SK-N-SH (cell line): ENCODE measurements at regions of chr15 and their contacts with region 1.

Region 1: DNA sequence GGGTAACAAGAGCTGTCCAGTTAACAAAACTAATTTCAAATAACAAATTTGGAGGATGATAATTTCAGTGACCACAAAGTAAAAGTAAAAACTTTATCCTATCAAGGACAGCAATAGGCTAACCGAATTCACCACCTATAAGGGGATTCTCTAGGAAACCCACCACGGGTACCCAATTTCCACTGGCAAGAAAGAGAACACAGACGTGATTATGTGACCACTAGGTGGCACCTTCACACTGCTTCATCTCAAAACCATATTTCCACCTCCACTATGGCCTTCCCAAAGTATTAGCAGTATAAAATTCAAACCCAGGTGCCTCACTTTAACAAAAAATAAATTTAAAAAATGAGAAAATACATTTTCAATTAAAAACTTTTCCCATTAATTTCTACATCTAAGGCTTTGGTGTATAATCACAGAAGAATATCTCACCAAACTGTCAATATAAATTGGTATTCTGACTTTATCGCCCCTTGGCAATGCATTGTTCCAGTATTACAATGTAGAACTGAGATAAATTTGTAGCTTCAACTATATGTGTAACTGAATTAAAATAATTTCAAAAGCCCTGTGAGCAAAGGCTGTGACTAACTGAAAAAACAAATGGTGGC is 96.5 kb downstream of the FSIP1 start:
- DNase-seq: peak; percentile 53
- H3K4me3 ChIP-seq: no peak overlapping the region
- H3K27ac ChIP-seq: peak overlapping the region in 1 of 2 experiments; percentile 3; a peak in 1 of 4 replicates
- H3K4me1 ChIP-seq: peaks cover 0 to 7% of the 10 kb centered on the region in 2 experiments; a peak in 2 of 4 replicates
- H3K27me3 ChIP-seq: no peaks in the 10 kb centered on the region
- CTCF ChIP-seq: peak; percentile 88
- EP300 ChIP-seq: no peak
- RAD21 ChIP-seq: peak; percentile 92

Region 2: GRCh38 chr15:38707802-38708671 is 978.1 kb before region 1 on chr15:
- CTCF ChIA-PET with region 1: interaction called, 10 read pairs
- POLR2A ChIA-PET with region 1: no interaction called
- DNase-seq: peak; percentile 44
- H3K4me3 ChIP-seq: no peak overlapping the region
- H3K27ac ChIP-seq: peak overlapping the region; percentile 18 to 36; a peak in 1 of 4 replicates
- H3K4me1 ChIP-seq: no peaks in the 10 kb centered on the region; a peak in 2 of 4 replicates
- H3K27me3 ChIP-seq: no peaks in the 10 kb centered on the region
- CTCF ChIP-seq: peak; percentile 85
- EP300 ChIP-seq: no peak
- RAD21 ChIP-seq: peak; percentile 98

Region 3: GRCh38 chr15:39666677-39667076 is 19.4 kb before region 1 on chr15:
- CTCF ChIA-PET with region 1: interaction called, 16 read pairs
- POLR2A ChIA-PET with region 1: no interaction called
- DNase-seq: no peak
- H3K4me3 ChIP-seq: no peak overlapping the region
- H3K27ac ChIP-seq: peak overlapping the region; percentile 53 to 68; a peak in 3 of 4 replicates
- H3K4me1 ChIP-seq: peaks cover 4 to 19% of the 10 kb centered on the region in 2 experiments
- H3K27me3 ChIP-seq: no peaks in the 10 kb centered on the region
- CTCF ChIP-seq: no peak
- EP300 ChIP-seq: no peak
- RAD21 ChIP-seq: no peak

Region 4: DNA sequence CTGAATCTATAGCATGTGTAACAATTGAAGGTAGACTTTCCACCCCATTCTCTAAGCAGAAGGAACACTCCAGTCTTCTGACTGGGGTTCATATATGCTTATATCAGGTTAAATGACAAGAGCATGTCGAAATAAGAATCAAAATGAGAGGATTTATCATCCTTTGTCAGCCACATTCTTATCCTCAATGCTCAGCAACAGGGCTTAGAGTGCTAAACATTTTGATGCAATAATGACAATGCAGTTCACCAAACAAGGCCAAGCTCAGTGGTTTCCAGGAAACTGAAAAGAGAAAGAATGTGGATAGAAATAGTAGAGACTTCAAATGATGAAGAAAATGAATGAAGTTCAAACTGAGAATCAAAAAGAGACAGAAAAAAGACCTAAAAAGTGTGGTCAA is 18.6 kb after region 1 on chr15:
- CTCF ChIA-PET with region 1: interaction called, 42 read pairs
- POLR2A ChIA-PET with region 1: no interaction called
- DNase-seq: no peak
- H3K4me3 ChIP-seq: no peak overlapping the region
- H3K27ac ChIP-seq: peak overlapping the region in 1 of 2 experiments; percentile 15; a peak in 1 of 4 replicates
- H3K4me1 ChIP-seq: no peaks in the 10 kb centered on the region
- H3K27me3 ChIP-seq: no peaks in the 10 kb centered on the region
- CTCF ChIP-seq: no peak
- EP300 ChIP-seq: no peak
- RAD21 ChIP-seq: no peak

Region 5: DNA sequence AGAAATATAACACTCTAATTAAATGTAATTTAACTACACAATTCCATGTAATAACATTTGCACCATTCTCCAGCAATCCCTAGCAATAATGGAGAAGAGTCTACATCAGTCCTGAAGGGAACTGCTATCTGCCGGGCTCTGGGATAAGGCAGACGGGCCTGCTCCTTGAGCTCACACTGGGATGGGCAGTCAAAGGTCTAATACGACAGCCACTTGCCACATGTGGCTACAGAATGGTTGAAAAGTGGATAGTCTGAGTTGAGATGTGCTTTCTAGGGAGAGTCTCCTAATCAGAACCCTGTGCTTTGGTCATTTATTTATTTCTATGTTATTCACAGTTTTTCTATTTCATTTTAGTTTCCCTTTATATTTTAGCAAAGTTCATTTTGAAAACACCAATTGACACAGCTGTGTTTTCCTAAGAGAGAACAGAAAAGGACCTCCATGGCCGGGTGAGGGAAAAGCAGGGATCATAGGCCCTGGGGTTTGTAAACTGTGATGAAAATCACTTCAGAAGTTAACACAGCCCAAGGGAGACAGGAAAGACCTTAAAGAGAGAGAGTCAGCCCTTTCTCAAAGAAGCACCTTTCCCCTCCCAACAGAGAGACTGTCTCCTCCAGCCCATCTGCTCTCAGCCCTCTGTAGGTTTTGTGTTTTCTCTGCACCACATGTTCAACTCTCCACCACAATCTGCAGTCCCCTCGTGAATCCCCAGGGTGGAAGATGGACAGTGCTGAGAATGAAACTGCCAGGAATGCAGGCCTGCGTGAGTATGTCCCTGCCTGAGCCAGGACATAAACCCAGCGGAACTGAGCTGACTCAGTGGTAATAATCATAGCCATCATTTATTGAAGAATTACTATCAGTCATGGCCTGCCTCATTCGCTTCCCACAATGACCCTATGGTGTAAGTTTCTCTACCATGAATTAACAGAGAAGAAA is 84.9 kb after region 1 on chr15:
- CTCF ChIA-PET with region 1: interaction called, 15 read pairs
- POLR2A ChIA-PET with region 1: no interaction called
- DNase-seq: no peak
- H3K4me3 ChIP-seq: peak overlapping the region in 1 of 2 experiments; percentile 22; a peak in 1 of 4 replicates
- H3K27ac ChIP-seq: peak overlapping the region; percentile 25 to 55; a peak in 3 of 4 replicates
- H3K4me1 ChIP-seq: peaks cover 0 to 11% of the 10 kb centered on the region in 2 experiments; a peak in 1 of 4 replicates
- H3K27me3 ChIP-seq: no peaks in the 10 kb centered on the region
- CTCF ChIP-seq: no peak
- EP300 ChIP-seq: no peak
- RAD21 ChIP-seq: no peak